ENCODE measurements at regions of chr12 and their contacts with region 1.

Region 1: DNA sequence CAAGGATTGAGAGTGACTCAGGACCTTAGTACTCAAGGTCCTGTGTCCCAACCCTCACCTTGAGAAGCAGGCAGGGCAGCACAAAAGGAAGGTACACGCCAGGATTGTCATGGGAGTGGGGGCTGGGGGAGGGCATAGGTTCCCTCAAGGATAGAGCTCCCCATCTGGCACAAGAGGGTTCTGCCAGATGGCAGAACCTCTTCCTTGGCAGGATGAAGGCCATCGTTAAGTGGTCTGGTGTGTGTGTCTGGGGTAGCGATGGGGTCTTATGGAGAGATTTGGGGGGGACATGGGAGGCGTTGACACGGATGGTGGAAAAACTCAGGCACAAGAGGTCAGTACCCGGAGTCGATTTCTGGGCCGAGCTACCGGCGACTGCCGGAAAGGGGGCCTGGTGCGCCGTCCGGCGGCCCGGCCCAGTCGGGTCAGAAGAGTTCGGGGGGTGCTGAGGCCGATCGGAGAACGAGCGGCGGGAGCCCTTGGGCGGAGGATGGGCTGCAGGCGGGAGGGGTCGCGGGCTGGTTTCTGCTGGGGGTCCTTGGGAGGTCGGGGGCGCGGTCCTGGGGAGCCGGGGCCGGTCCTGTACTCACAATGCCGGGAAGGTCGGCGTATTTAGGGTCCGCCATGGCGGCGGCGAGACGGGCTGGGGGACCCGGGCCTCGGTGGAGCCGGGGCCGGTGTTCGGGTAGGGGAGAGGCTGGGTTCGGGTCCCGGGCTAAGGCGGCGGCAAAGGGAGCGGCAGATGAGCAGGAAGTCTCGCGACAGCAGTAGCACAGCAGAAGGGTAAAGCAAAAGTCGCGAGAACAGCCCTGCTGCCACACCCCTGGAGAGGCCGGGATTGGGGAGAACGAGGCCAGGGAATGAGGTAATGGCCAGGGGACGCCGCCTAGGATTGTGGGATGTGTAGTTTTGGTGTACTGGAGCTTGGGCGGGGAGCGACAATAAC is at the start of gene DCTN2:
- DNase-seq: peak; percentile 97 to 98 (median 98)
- H3K4me3 ChIP-seq: peak within 1 kb of the TSS; percentile 73 to 92 (median 83)
- H3K27ac ChIP-seq: peak within 1 kb of the TSS; percentile 81 to 91
- H3K4me1 ChIP-seq: peaks cover 0 to 38% (median 22%) of the 10 kb centered on the region in 4 experiments
- H3K27me3 ChIP-seq: peaks cover 0 to 14% (median 2%) of the 10 kb centered on the region in 5 experiments

Region 2: DNA sequence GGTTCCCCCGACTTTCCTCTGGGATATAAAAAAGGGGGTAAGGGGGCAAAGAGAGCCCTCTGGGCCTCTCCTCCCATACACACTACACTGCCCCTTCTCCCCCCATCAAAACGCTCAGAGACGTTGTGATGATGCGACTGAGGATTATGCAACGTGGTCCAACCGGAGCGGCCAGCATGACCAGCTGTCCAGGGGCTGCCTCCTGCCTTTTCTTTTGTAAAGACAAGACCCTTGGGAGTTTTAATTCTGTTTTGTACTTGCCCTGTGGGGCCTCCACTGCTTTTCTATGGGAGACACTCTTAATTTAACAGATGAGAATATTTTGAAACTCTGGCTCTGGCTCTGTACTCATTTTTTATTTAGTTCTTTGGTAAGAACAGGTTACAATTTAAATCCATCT is 16.9 kb before region 1 on chr12:
- CTCF ChIA-PET with region 1: interaction called, 11 read pairs
- POLR2A ChIA-PET with region 1: interaction called, 4 read pairs
- DNase-seq: no peak
- H3K4me3 ChIP-seq: no peak overlapping the region
- H3K27ac ChIP-seq: peak overlapping the region in 1 of 2 experiments; percentile 28
- H3K4me1 ChIP-seq: peaks cover 0 to 4% (median under 1%) of the 10 kb centered on the region in 4 experiments
- H3K27me3 ChIP-seq: no peaks in the 10 kb centered on the region

Measured in common myeloid progenitor, CD34-positive (primary cell).